ENCODE measurements at regions of chr5 and their contacts with region 1.

Region 1: GRCh38 chr5:72816311-72817145 is at the start of gene TNPO1:
- H3K4me3 Mint-ChIP-seq: peak within 1 kb of the TSS; percentile 93
- H3K27ac Mint-ChIP-seq: peak within 1 kb of the TSS; percentile 94
- H3K4me1 Mint-ChIP-seq: peaks cover 17% of the 10 kb centered on the region
- H3K27me3 Mint-ChIP-seq: no peaks in the 10 kb centered on the region

Region 2: GRCh38 chr5:71922584-71923106 is 893.9 kb before region 1 on chr5:
- intact Hi-C with region 1: no loop called
- H3K4me3 Mint-ChIP-seq: no peak overlapping the region
- H3K27ac Mint-ChIP-seq: no peak overlapping the region
- H3K4me1 Mint-ChIP-seq: no peaks in the 10 kb centered on the region
- H3K27me3 Mint-ChIP-seq: no peaks in the 10 kb centered on the region

Region 3: GRCh38 chr5:72355706-72356299 is 460.7 kb before region 1 on chr5:
- intact Hi-C with region 1: loop called (anchors 10 kb)
- H3K4me3 Mint-ChIP-seq: no peak overlapping the region
- H3K27ac Mint-ChIP-seq: no peak overlapping the region
- H3K4me1 Mint-ChIP-seq: peaks cover 40% of the 10 kb centered on the region
- H3K27me3 Mint-ChIP-seq: no peaks in the 10 kb centered on the region

Region 4: GRCh38 chr5:72611118-72611730 is 205.3 kb before region 1 on chr5:
- intact Hi-C with region 1: loop called (anchors 1 kb)
- H3K4me3 Mint-ChIP-seq: no peak overlapping the region
- H3K27ac Mint-ChIP-seq: no peak overlapping the region
- H3K4me1 Mint-ChIP-seq: peaks cover 6% of the 10 kb centered on the region
- H3K27me3 Mint-ChIP-seq: peaks cover 10% of the 10 kb centered on the region

Region 5: DNA sequence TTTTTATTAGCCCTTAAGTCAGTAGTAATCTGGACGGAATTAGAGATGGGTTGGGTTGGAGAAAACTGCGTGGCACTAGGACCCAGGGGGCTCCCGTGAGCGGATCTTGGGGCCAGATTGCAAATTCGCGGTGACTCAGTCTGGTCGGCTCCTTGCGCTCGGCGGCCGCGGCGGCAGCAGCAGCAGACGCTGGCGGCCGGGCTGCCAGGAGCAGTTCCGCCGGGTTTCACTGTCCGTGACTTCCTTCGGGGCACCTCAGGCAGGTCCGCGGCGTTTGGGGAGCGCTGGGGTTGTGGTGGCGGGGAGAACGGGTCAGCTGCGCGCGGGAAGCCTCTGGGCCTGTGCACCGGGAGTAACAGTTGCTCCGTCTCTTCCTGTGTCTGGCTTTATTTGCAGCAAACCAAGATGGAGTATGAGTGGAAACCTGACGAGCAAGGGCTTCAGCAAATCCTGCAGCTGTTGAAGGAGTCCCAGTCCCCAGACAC is 31.5 kb after region 1 on chr5:
- intact Hi-C with region 1: loop called (anchors 2 kb)
- H3K4me3 Mint-ChIP-seq: peak overlapping the region; percentile 94
- H3K27ac Mint-ChIP-seq: peak overlapping the region; percentile 98
- H3K4me1 Mint-ChIP-seq: peaks cover 49% of the 10 kb centered on the region
- H3K27me3 Mint-ChIP-seq: no peaks in the 10 kb centered on the region

Region 6: DNA sequence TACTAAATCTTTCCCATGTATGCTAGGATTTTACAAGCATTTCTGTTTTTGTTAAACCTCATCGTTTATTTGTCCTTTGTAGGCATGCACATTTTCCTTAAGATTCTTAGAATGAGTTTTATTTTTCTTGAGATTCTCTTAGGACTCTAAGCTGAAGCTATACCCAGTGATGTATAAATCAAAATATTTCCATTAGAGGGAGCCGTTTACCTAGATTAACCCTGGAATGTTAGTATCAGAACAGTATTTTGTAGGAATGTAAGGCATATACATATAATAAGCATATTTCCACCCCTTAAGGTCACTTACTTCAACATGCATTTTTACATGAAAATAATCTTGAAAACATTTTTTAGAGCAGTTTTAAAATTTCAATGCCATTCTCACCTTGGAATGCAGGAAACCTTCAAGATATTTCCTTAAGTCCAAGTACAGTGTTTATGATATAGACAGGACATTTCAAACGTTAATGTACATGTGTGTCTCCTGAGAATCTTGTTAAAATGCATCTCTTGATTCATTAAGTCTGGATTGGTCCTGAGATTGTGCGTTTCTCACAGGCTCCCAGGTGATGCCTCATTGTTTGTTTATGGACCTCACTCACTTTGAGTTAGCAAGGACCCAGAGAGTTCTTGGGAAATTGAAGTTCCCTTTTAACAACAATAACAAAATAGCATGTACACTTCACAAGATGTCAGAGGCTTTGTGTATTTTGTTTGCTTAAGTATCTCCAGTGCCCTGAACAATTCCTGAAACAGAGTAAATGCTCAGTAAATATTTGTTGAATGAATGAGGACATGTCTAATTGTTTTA is 104.4 kb after region 1 on chr5:
- intact Hi-C with region 1: no loop called
- H3K4me3 Mint-ChIP-seq: no peak overlapping the region
- H3K27ac Mint-ChIP-seq: peak overlapping the region; percentile 53
- H3K4me1 Mint-ChIP-seq: peaks cover 13% of the 10 kb centered on the region
- H3K27me3 Mint-ChIP-seq: peaks cover 3% of the 10 kb centered on the region

Measured in dendritic cell treated with granulocyte-macrophage colony-stimulating factor and Interleukin-4, amounts not matched to agents 40 ng/mL and 50 ng/mL, for 4 days (primary cell).